ENCODE measurements at regions of chr19 and their contacts with region 1.

Region 1: GRCh38 chr19:6171566-6171965 is 36.1 kb downstream of the ACSBG2 start:
- DNase-seq: no peak
- H3K4me3 ChIP-seq: no peak overlapping the region
- CTCF ChIP-seq: no peak
- POLR2A ChIP-seq: no peak

Region 2: DNA sequence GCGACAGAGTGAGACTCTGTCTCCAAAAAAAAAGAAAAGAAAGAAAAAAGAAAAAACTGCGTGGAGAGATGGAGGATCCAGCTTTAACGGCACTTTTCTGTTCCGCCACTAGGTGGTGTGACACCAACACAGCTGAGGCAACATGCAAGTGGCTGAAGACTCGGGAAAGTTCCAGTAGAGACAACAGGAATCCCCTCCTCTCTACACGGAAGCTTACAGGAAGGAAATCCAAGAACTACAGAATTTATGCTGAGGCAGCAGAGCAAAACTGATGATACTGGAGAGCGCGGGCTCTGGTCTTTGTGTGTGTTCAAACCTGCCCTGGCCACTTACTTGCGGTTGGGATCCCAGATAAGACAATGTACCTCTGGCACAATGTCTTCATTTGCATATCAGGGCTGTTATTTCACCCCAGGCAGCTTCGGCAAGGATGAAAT is 203.6 kb before region 1 on chr19:
- intact Hi-C with region 1: no loop called
- DNase-seq: peak in 1 of 2 donors; percentile 60
- H3K4me3 ChIP-seq: no peak overlapping the region
- CTCF ChIP-seq: peak in 1 of 3 donors; percentile 53
- POLR2A ChIP-seq: no peak

Region 3: GRCh38 chr19:7844951-7845350 is 1673.4 kb after region 1 on chr19:
- intact Hi-C with region 1: loop called (anchors 5 kb)
- DNase-seq: no peak
- H3K4me3 ChIP-seq: no peak overlapping the region
- CTCF ChIP-seq: no peak
- POLR2A ChIP-seq: no peak

Measured in lower leg skin (tissue), 4 donors.